Calu3 (cell line): ENCODE measurements at regions of chr12 and their contacts with region 1.

Region 1: DNA sequence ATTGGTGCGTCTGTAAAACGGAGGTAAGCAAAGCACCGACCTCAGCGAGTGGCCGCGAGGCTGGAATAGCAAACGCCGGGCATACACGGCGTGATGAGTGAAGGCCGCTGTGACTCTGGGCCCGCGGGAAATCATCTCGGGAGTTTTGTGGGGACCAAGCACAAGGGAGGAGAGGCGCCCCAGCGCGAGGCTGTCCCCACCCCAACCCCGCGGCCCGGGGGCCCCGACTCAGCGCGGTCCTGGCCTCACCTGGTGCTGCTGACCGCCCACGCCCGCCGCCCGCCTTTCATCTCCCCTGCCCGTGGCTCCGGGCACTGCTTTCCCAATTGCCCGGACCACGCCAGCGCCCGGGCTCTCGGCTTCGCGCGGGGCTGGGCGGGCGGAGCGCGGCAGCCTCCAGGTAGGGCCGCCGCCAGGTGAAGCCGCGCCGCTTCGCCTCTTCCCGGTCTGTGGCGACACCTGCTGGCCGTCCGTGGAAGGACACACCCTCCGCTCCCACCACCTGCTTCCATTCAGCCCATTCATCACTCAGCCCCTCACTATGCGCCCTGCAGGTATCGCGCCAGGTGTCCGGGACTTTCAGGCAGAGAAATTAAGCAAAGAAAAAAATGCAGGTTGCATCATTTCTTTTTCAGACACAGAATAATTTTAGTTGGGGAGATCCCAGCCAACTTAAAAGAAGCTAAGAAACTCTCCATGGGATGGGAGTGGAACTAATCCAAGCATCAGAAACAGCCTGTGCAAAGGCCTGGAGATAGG is 360.4 kb downstream of the MED13L start:
- DNase-seq: peak; percentile 91
- H3K4me3 Mint-ChIP-seq: peak overlapping the region; percentile 60
- H3K27ac Mint-ChIP-seq: no peak overlapping the region
- H3K4me1 Mint-ChIP-seq: no peaks in the 10 kb centered on the region
- H3K27me3 Mint-ChIP-seq: peaks cover 80% of the 10 kb centered on the region
- CTCF ChIP-seq: peak; percentile 98

Region 2: GRCh38 chr12:114662512-114663177 is 1254.4 kb before region 1 on chr12:
- CTCF ChIA-PET with region 1: interaction called, 3 read pairs
- intact Hi-C with region 1: loop called (anchors 1 kb)
- DNase-seq: peak; percentile 83
- H3K4me3 Mint-ChIP-seq: no peak overlapping the region
- H3K27ac Mint-ChIP-seq: no peak overlapping the region
- H3K4me1 Mint-ChIP-seq: peaks cover 3% of the 10 kb centered on the region
- H3K27me3 Mint-ChIP-seq: peaks cover under 1% of the 10 kb centered on the region
- CTCF ChIP-seq: peak; percentile 92

Region 3: GRCh38 chr12:115752913-115753726 is 164.0 kb before region 1 on chr12:
- CTCF ChIA-PET with region 1: no interaction called
- intact Hi-C with region 1: loop called (anchors 1 kb)
- DNase-seq: peak; percentile 30
- H3K4me3 Mint-ChIP-seq: no peak overlapping the region
- H3K27ac Mint-ChIP-seq: no peak overlapping the region
- H3K4me1 Mint-ChIP-seq: no peaks in the 10 kb centered on the region
- H3K27me3 Mint-ChIP-seq: peaks cover 14% of the 10 kb centered on the region
- CTCF ChIP-seq: no peak

Region 4: DNA sequence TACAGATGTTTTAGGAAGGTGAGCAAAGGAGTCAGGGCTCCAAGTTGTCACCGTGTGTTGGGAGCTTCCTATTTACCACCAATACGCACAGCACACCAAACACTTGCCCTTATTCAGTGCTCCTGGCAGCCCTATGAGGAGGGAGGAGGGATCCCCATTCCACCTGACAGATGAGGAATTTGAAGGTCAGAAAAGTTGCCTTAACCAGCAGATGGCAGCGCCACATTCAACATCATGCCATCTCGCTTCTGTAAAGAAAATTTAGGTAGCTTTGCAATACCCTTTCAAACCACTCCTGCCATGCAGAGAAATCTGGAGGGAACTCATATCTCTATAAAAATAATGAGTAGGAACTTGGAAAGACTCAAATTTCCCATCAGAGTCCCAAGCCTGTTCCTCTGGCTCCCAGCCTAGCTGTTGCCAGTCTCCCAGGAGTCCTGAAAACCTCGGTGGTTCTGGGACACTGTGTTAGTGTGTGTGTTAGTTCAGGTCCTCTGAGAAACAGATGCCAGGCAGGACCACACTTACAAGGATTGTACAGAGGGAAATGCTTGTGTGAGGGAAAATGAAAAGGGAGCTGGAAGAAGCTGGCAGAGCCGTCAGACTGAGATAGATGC is 50.1 kb before region 1 on chr12:
- CTCF ChIA-PET with region 1: interaction called, 6 read pairs
- intact Hi-C with region 1: loop called (anchors 1 kb)
- DNase-seq: peak; percentile 42
- H3K4me3 Mint-ChIP-seq: no peak overlapping the region
- H3K27ac Mint-ChIP-seq: no peak overlapping the region
- H3K4me1 Mint-ChIP-seq: peaks cover 5% of the 10 kb centered on the region
- H3K27me3 Mint-ChIP-seq: peaks cover 18% of the 10 kb centered on the region
- CTCF ChIP-seq: no peak

Region 5: DNA sequence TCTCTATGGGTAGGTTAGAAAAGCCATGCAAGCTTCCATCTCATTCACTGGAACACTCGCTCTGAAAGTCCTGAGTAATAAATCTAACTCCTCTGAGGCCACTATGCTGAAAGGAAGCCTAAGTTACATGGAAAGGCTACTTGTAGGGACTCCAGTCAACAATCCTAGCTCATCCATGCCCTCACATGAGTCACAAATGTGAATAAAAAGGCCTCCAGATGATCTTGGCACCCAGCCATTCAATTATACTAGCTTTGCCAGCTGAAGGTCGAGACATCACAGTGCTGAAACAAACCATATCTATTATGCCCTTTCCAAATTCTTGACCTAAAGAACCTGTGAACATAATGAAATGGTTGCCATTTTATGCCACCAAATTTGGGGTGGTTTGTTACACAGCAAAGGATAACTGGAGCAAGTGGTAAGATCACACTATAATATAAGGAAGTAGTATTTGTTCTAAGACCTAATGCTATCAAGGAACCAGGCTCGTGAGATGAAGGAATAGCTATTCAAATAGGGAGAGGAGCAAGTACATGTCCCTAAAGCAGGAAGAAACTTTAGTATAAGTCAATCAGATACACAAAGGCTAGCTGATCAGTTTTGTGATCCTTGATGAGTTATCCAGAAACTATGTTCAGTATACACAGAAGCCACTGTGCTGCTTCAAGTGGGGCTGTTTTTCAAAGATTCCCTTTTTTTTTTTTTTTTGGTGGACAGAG is 218.3 kb after region 1 on chr12:
- CTCF ChIA-PET with region 1: no interaction called
- intact Hi-C with region 1: no loop called
- DNase-seq: peak; percentile 26
- H3K4me3 Mint-ChIP-seq: no peak overlapping the region
- H3K27ac Mint-ChIP-seq: peak overlapping the region; percentile 42
- H3K4me1 Mint-ChIP-seq: peaks cover 18% of the 10 kb centered on the region
- H3K27me3 Mint-ChIP-seq: no peaks in the 10 kb centered on the region
- CTCF ChIP-seq: no peak